Calu3 (cell line): ENCODE measurements at regions of chr1 and their contacts with region 1.

Region 1: DNA sequence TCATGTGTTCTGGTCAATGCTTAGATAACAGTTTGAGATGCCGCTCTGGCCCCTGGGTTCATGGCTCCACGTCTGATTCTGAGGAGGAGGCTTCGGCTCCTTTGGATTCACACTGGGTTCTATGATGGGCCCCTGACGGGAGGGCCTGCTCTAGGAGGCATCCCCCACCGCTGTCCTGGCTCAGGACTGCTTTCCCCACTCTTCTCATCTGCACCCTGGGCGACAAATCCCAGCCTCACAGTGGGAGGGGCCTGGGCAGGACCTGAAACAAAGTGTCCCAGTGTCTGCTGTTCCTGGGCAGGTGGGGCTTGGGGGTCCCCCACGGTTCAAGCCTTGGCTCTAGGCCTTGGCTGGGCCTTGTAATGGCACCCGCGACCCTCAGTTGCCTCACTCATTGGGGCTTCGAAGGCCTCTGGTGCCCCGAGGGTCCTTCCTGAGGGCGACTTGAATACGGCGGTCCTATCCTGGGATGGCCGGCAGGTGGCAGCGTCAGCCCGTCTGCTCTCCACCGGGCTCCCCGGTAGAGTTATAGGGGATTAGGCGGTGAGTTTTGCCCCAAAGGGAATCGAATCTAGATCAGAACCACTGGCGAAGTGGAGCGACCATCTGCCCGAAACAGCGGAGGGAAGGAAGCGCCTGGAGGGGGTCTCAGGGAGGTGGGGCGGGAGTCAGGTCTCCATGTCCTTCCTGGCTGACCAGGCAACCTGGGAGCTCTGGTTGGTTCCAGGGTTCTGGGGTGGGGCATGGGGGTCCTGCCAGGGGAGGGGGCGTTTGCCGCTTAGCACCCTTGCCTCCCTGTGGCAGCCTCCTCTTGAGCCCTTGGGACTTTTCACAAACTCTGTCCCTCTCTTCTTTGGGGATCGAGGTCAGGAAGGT is 2.0 kb upstream of the PEX10 start:
- DNase-seq: peak; percentile 74
- H3K4me3 Mint-ChIP-seq: peak overlapping the region; percentile 66
- H3K27ac Mint-ChIP-seq: peak overlapping the region; percentile 45
- H3K4me1 Mint-ChIP-seq: peaks cover 26% of the 10 kb centered on the region
- H3K27me3 Mint-ChIP-seq: no peaks in the 10 kb centered on the region
- CTCF ChIP-seq: peak; percentile 85

Region 2: DNA sequence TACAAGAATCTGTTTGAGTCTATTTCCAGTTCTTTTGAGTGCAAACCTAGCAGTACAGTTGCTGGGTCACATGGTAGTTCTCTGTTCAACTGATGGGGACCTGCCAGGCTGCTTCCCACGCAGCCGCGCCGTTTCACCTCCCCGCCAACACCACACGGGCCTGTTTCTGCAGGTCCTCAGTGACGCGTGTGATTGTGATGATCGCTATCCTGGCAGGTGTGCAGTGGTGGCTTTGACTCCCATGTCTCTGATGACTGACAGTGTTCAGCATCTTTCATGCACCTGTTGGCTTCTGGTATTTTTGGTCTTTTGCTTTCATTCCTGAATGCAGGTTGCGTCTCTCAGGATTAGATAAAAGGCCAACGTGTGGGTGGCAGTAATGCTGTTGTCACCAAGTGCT is 261.4 kb before region 1 on chr1:
- CTCF ChIA-PET with region 1: no interaction called
- intact Hi-C with region 1: no loop called
- DNase-seq: no peak
- H3K4me3 Mint-ChIP-seq: no peak overlapping the region
- H3K27ac Mint-ChIP-seq: no peak overlapping the region
- H3K4me1 Mint-ChIP-seq: no peaks in the 10 kb centered on the region
- H3K27me3 Mint-ChIP-seq: no peaks in the 10 kb centered on the region
- CTCF ChIP-seq: no peak

Region 3: DNA sequence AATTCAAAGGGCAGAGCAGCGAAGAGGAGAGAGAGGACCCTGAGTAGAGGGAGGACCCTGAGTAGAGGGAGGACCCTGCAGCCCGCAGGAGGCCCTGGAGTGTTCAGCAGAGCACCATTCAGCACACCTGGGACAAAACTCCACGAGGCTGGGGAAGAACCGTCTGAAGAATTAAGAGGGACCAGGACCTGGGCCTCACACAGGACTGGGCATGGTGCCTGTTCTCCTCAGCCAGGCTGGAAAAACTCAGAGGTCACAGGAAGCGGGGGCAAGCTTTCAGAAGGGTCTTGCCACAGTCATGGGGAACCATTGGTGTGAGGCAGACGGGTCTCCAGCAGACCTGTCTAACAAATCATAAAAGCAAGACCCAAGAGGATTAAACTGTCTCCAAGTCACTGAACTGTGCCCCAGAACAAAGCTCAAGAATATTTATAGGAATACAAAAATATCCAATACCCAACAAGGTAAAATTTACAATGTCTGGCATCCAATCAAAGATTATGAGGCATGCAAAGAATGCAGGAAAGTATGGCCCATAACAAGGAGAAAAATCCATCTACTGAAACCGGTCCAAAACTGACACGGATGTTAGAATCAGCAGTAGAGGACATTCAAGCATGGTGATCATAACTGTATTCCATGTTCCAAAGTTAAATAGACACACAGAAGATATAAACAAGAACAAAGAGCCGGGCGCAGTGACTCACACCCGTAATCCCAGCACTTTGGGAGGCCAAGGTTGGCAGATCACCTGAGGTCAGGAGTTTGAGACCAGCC is 53.5 kb before region 1 on chr1:
- CTCF ChIA-PET with region 1: no interaction called
- intact Hi-C with region 1: no loop called
- DNase-seq: no peak
- H3K4me3 Mint-ChIP-seq: no peak overlapping the region
- H3K27ac Mint-ChIP-seq: no peak overlapping the region
- H3K4me1 Mint-ChIP-seq: no peaks in the 10 kb centered on the region
- H3K27me3 Mint-ChIP-seq: no peaks in the 10 kb centered on the region
- CTCF ChIP-seq: no peak

Region 4: GRCh38 chr1:2545759-2546514 is 131.6 kb after region 1 on chr1:
- CTCF ChIA-PET with region 1: interaction called, 19 read pairs
- intact Hi-C with region 1: loop called (anchors 1 kb)
- DNase-seq: peak; percentile 91
- H3K4me3 Mint-ChIP-seq: peak overlapping the region; percentile 80
- H3K27ac Mint-ChIP-seq: peak overlapping the region; percentile 60
- H3K4me1 Mint-ChIP-seq: no peaks in the 10 kb centered on the region
- H3K27me3 Mint-ChIP-seq: no peaks in the 10 kb centered on the region
- CTCF ChIP-seq: no peak